Activated CD4-positive, alpha-beta T cell treated with anti-CD3 and anti-CD28 coated beads, Interleukin-2, amount 10 ng/mL, durations not matched to agents 24 days and 14 days (primary cell): ENCODE measurements at regions of chr2 and their contacts with region 1.

Region 1: DNA sequence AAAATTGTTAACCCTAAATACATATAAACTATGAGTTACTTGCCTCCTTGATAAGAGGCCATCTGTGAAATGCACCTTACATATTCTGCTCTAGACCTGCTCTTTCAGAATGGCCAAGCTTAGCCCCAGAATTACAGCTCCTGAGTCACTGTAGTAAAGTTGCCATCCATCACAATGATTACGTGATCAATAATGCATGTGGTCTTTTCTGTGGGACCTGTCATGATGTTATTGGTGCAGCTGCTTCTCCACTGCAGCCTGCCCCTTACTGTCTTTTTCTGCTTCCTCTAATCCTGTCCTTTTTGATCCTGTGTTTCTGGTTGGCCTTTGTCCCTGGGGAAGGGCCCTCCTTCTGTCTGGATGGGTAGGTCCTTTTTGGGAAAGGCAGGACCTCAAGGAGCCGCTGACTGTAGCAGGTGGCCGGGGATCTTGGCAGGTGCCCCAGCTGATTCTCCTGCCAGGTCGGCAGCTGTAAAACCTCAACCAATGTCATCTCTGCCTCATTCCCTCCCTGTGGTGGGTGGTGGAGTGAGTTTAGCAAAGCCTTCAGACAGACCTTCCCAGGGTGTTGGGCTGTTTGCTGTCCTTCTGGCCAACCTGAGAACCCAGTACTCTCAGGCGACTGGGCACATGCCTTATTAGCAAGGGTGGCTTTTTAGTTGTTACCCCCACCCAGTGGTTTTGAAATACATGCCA is 126.2 kb upstream of the EML6 start:
- DNase-seq: peak; percentile 76
- H3K4me3 Mint-ChIP-seq: peak overlapping the region; percentile 80
- H3K27ac Mint-ChIP-seq: peak overlapping the region; percentile 97
- H3K4me1 Mint-ChIP-seq: peaks cover 82% of the 10 kb centered on the region
- H3K27me3 Mint-ChIP-seq: no peaks in the 10 kb centered on the region

Region 2: GRCh38 chr2:53987336-53987921 is 609.9 kb before region 1 on chr2:
- intact Hi-C with region 1: no loop called
- DNase-seq: no peak
- H3K4me3 Mint-ChIP-seq: no peak overlapping the region
- H3K27ac Mint-ChIP-seq: no peak overlapping the region
- H3K4me1 Mint-ChIP-seq: peaks cover 7% of the 10 kb centered on the region
- H3K27me3 Mint-ChIP-seq: no peaks in the 10 kb centered on the region

Region 3: GRCh38 chr2:54579684-54580620 is 17.3 kb before region 1 on chr2:
- intact Hi-C with region 1: loop called (anchors 1 kb)
- DNase-seq: peak; percentile 91
- H3K4me3 Mint-ChIP-seq: peak overlapping the region; percentile 77
- H3K27ac Mint-ChIP-seq: peak overlapping the region; percentile 93
- H3K4me1 Mint-ChIP-seq: peaks cover 82% of the 10 kb centered on the region
- H3K27me3 Mint-ChIP-seq: no peaks in the 10 kb centered on the region

Region 4: DNA sequence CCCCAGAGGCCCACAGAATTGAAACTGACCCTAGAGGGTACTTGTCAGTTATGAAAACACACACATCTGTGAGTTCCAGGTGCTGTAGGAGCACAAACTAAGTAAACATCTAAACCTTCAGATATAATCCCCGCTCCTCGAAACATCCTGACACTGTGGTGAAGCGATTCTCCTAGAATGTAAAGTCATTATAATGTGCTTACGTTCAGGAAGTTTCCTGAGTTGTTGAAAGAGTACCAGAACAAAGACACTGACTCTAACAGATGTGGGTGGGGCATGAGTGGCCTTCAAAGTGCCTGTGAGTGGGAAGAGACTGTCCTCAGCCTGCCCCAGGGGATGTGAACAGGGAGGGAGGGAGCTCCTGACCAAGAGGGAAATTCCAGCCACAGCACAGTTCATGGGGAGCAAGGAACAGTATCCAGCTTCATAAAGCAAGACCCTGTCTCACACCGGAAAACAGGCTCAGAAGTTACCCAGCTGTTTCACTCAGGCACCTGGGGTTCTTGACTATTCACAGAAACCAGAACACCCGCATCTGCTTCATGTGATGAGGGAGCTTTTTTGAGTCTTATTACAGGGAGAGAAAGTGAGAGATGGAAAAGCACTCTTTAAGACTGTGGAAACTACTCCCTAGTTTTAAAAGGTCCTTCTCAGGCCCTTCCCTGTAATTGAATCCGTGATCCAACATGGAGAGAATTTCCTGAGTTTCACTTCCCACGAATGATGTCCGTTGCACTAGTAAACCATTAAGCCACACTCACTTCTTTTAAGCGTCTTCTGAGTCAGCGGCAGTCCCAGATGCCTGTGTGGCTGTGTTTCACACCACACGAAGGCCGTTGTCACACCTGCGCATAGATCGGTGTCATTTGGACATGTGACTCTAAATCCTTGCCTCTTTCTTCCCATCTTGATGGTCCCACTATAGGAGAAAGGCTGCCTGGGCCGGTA is 37.5 kb after region 1 on chr2:
- intact Hi-C with region 1: loop called (anchors 5 kb)
- DNase-seq: peak; percentile 72
- H3K4me3 Mint-ChIP-seq: peak overlapping the region; percentile 53
- H3K27ac Mint-ChIP-seq: peak overlapping the region; percentile 84
- H3K4me1 Mint-ChIP-seq: peaks cover 31% of the 10 kb centered on the region
- H3K27me3 Mint-ChIP-seq: no peaks in the 10 kb centered on the region

Region 5: DNA sequence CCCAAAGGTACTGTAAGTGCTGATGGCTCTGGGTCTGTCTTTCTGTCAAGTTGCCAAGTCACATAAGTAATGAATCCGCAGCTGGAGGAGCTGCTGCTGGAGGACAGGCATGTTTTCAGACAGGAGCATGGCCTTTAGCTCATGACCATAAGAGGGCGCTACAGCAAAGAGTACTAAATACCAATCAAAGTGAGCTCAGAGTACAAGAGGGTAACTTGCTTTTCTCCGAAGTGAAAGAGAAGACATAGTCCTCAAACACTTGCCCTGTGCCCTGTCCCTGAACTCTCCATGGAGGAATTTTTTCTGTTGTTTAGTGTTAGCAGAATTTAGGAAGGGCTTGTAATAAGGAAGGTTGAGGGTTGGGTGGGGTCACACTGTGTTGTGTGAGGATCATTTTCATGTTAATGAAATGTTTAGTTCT is 68.1 kb after region 1 on chr2:
- intact Hi-C with region 1: no loop called
- DNase-seq: peak; percentile 86
- H3K4me3 Mint-ChIP-seq: no peak overlapping the region
- H3K27ac Mint-ChIP-seq: no peak overlapping the region
- H3K4me1 Mint-ChIP-seq: peaks cover 15% of the 10 kb centered on the region
- H3K27me3 Mint-ChIP-seq: no peaks in the 10 kb centered on the region